ENCODE measurements at regions of chr12 and their contacts with region 1.

Region 1: GRCh38 chr12:47715393-47715876 is 9.6 kb upstream of the RPAP3 start:
- DNase-seq: peak; percentile 81
- H3K4me3 ChIP-seq: no peak overlapping the region
- H3K27ac ChIP-seq: no peak overlapping the region
- H3K4me1 ChIP-seq: peaks cover 7% of the 10 kb centered on the region
- H3K27me3 ChIP-seq: no peaks in the 10 kb centered on the region
- CTCF ChIP-seq: peak; percentile 69

Region 2: GRCh38 chr12:47779301-47779942 is 64.0 kb after region 1 on chr12:
- intact Hi-C with region 1: loop called (anchors 5 kb)
- DNase-seq: peak; percentile 93
- H3K4me3 ChIP-seq: no peak overlapping the region
- H3K27ac ChIP-seq: no peak overlapping the region
- H3K4me1 ChIP-seq: no peaks in the 10 kb centered on the region
- H3K27me3 ChIP-seq: no peaks in the 10 kb centered on the region
- CTCF ChIP-seq: peak; percentile 94